ENCODE measurements at regions of chr16 and their contacts with region 1.

Region 1: GRCh38 chr16:70523076-70523742 is at the start of gene COG4:
- DNase-seq: peak; percentile 84
- H3K4me3 ChIP-seq: peak within 1 kb of the TSS; percentile 54 to 94 (median 85)
- H3K27ac ChIP-seq: peak within 1 kb of the TSS; percentile 82
- H3K4me1 ChIP-seq: peaks cover 40% of the 10 kb centered on the region
- H3K27me3 ChIP-seq: no peaks in the 10 kb centered on the region
- CTCF ChIP-seq: no peak
- POLR2A ChIP-seq: peak; percentile 83
- total RNA-seq, gene COG4: 46.5 and 61.2 TPM in 2 replicates

Region 2: GRCh38 chr16:70380861-70381603 is 142.2 kb before region 1 on chr16:
- CTCF ChIA-PET with region 1: no interaction called
- POLR2A ChIA-PET with region 1: interaction called, 8 read pairs
- dilution Hi-C with region 1: no loop called
- intact Hi-C with region 1: loop called (anchors 1 kb)
- DNase-seq: peak; percentile 98
- H3K4me3 ChIP-seq: peak overlapping the region; percentile 51 to 59 (median 54)
- H3K27ac ChIP-seq: no peak overlapping the region
- H3K4me1 ChIP-seq: peaks cover 6% of the 10 kb centered on the region
- H3K27me3 ChIP-seq: no peaks in the 10 kb centered on the region
- CTCF ChIP-seq: peak; percentile 6 to 9
- POLR2A ChIP-seq: peak; percentile 94

Region 3: DNA sequence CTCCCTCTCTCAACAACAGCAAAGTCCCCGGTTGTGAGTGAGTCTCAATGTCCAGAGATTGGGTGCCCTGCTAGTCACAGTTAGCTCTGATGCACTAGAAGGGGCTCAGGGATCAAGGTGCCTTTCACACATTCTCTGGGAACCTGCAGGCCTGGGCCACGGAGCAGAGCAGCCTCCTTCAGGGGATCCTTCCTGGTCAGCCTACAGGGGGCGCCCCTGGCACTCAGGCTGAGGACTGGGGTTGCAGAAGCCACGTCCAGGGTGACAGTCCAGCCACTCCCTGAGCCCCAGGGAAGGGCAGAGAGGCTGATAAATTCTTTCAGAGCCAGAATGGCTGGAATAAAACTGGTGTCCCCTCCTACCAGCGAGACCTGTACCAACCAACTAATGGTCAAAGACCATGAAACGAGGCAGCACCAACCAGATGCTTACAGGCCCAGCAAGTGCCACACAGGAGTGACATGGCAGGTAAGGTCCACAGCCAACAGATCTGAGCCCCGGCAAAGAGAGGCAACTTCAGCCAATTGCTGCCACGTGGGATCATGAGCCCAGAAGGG is 127.8 kb before region 1 on chr16:
- CTCF ChIA-PET with region 1: no interaction called
- POLR2A ChIA-PET with region 1: no interaction called
- dilution Hi-C with region 1: no loop called
- intact Hi-C with region 1: loop called (anchors 1 kb)
- DNase-seq: peak; percentile 59
- H3K4me3 ChIP-seq: no peak overlapping the region
- H3K27ac ChIP-seq: no peak overlapping the region
- H3K4me1 ChIP-seq: no peaks in the 10 kb centered on the region
- H3K27me3 ChIP-seq: no peaks in the 10 kb centered on the region
- CTCF ChIP-seq: peak; percentile 76 to 89
- POLR2A ChIP-seq: no peak

Region 4: GRCh38 chr16:70448075-70448474 is 75.1 kb before region 1 on chr16:
- CTCF ChIA-PET with region 1: no interaction called
- POLR2A ChIA-PET with region 1: no interaction called
- dilution Hi-C with region 1: no loop called
- intact Hi-C with region 1: no loop called
- DNase-seq: no peak
- H3K4me3 ChIP-seq: no peak overlapping the region
- H3K27ac ChIP-seq: no peak overlapping the region
- H3K4me1 ChIP-seq: no peaks in the 10 kb centered on the region
- H3K27me3 ChIP-seq: no peaks in the 10 kb centered on the region
- CTCF ChIP-seq: no peak
- POLR2A ChIP-seq: no peak

Measured in endothelial cell of umbilical vein (primary cell).